IMR-90 (cell line): ENCODE measurements at regions of chr18 and their contacts with region 1.

Region 1: DNA sequence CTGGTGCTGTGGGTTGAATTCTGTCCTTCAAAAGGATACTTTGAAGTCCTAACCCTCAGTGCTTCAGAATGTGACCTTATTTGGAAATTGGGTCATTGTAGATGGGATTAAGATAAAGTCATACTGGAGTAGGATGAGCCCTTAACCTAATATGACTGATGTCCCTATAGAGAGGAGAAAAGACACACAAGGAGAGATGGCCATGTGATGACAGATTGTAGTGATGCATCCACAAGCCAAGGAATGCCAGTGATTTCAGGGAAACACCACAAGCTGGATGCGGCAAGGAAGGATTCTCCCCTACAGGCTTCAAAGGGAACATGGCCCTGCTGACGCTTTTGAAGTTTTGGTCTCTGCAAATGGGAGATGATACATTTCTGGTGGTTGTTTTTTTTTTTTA is 24.7 kb upstream of the CCBE1 start:
- DNase-seq: no peak
- ATAC-seq: no peak
- H3K4me3 ChIP-seq: no peak overlapping the region
- H3K27ac ChIP-seq: no peak overlapping the region
- H3K4me1 ChIP-seq: peaks cover 27% of the 10 kb centered on the region
- H3K27me3 ChIP-seq: no peaks in the 10 kb centered on the region
- CTCF ChIP-seq: no peak
- POLR2A ChIP-seq: no peak
- RAD21 ChIP-seq: no peak

Region 2: DNA sequence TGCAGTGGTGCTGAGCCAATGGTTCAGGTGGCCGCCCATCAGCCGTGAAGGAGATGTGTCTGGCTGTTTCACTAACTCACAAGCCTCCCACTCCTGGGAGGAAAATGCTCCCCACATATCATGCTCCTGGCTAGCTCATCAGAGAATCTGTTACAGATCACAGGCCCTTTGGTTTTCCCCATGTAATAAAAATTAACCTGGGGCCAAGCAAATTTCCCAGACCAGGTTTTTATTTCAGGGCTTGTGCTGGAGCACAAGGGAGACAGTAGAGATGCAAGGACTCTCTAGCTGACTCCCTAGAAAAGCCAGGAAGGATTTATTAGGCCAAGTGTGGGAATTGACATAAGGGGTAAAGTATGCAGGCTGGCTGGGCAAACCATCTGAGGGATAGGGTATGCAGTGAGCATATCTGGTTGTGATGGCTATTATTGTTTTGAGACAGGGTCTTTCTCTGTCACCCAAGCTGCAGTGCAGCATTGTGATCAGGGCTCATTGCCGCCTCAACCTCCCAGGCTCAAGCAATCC is 15.9 kb after region 1 on chr18:
- CTCF ChIA-PET with region 1: no interaction called
- POLR2A ChIA-PET with region 1: no interaction called
- dilution Hi-C with region 1: no loop called
- in situ Hi-C with region 1: no loop called
- intact Hi-C with region 1: loop called (anchors 2 kb)
- DNase-seq: no peak
- ATAC-seq: no peak
- H3K4me3 ChIP-seq: no peak overlapping the region
- H3K27ac ChIP-seq: no peak overlapping the region
- H3K4me1 ChIP-seq: peaks cover 13% of the 10 kb centered on the region
- H3K27me3 ChIP-seq: no peaks in the 10 kb centered on the region
- CTCF ChIP-seq: no peak
- POLR2A ChIP-seq: no peak
- RAD21 ChIP-seq: no peak

Region 3: DNA sequence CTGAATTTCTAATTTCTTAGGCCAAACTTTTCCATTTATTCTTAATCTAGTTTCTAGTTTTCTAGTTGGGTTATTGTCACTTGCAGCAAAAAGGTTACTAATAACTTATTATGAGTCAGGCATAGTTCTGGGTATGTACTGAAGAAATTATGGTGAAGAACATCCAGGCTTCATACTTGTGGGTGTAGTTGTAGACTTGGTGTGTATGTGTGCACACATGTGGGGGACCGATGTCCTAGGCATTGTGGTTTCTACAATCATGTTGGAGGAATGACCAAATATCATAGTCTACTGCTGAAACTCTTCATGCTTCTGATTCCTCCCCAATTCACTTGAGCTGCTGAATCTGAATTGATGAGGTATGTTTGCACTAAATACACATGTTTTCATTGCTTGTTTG is 319.0 kb after region 1 on chr18:
- CTCF ChIA-PET with region 1: no interaction called
- POLR2A ChIA-PET with region 1: no interaction called
- dilution Hi-C with region 1: no loop called
- in situ Hi-C with region 1: no loop called
- intact Hi-C with region 1: no loop called
- DNase-seq: no peak
- ATAC-seq: no peak
- H3K4me3 ChIP-seq: no peak overlapping the region
- H3K27ac ChIP-seq: no peak overlapping the region
- H3K4me1 ChIP-seq: peaks cover 2% of the 10 kb centered on the region
- H3K27me3 ChIP-seq: no peaks in the 10 kb centered on the region
- CTCF ChIP-seq: no peak
- POLR2A ChIP-seq: no peak
- RAD21 ChIP-seq: no peak

Region 4: GRCh38 chr18:60110836-60111235 is 388.9 kb after region 1 on chr18:
- CTCF ChIA-PET with region 1: no interaction called
- POLR2A ChIA-PET with region 1: no interaction called
- dilution Hi-C with region 1: no loop called
- in situ Hi-C with region 1: no loop called
- intact Hi-C with region 1: no loop called
- DNase-seq: no peak
- ATAC-seq: no peak
- H3K4me3 ChIP-seq: no peak overlapping the region
- H3K27ac ChIP-seq: no peak overlapping the region
- H3K4me1 ChIP-seq: no peaks in the 10 kb centered on the region
- H3K27me3 ChIP-seq: peaks cover 1% of the 10 kb centered on the region; the same call in 1 of the 2 replicates
- CTCF ChIP-seq: no peak
- POLR2A ChIP-seq: no peak
- RAD21 ChIP-seq: no peak